ENCODE measurements at regions of chr3 and their contacts with region 1.

Region 1: GRCh38 chr3:49939858-49940666 is at the start of gene RBM6:
- DNase-seq: peak; percentile 99
- H3K4me3 ChIP-seq: peak within 1 kb of the TSS; percentile 85
- H3K27ac ChIP-seq: peak within 1 kb of the TSS; percentile 81
- H3K4me1 ChIP-seq: peaks cover 35% of the 10 kb centered on the region
- CTCF ChIP-seq: no peak
- total RNA-seq, gene RBM6: 83.7 and 134 TPM in 2 replicates

Region 2: DNA sequence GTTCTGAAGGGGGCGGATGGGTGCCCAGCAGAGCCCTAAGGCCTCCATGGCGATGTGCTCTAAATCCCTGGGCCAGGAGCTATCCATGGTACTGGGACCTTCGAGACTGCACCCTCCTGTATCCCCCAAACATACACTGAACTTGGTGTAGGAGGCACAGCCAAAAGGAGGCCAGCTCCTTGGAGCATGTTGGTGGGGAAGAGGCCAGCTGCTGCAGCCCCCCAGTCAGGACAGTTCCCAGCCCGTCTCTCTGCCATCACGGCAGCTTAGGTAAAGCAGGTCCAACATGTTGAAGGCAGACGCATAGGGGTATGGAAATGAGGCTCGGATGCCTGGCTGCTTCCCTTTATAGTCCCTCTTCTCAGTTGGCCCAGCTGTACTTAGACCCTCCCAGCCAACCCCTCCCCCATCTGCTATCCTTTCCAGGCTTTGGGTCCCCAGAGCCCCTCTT is 72.2 kb before region 1 on chr3:
- CTCF ChIA-PET with region 1: no interaction called
- POLR2A ChIA-PET with region 1: no interaction called
- intact Hi-C with region 1: no loop called
- DNase-seq: peak; percentile 30
- H3K4me3 ChIP-seq: no peak overlapping the region
- H3K27ac ChIP-seq: no peak overlapping the region
- H3K4me1 ChIP-seq: peaks cover 17% of the 10 kb centered on the region
- CTCF ChIP-seq: no peak

Region 3: GRCh38 chr3:49929331-49930240 is 10.5 kb before region 1 on chr3 and contains the start of gene MON1A:
- CTCF ChIA-PET with region 1: interaction called, 6 read pairs
- POLR2A ChIA-PET with region 1: interaction called, 32 read pairs
- intact Hi-C with region 1: no loop called
- DNase-seq: peak; percentile 87
- H3K4me3 ChIP-seq: peak within 1 kb of the TSS; percentile 76
- H3K27ac ChIP-seq: peak within 1 kb of the TSS; percentile 51
- H3K4me1 ChIP-seq: peaks cover 32% of the 10 kb centered on the region
- CTCF ChIP-seq: peak; percentile 50
- total RNA-seq, gene MON1A: 6.7 and 7.3 TPM in 2 replicates

Region 4: GRCh38 chr3:50088725-50089608 is 148.9 kb after region 1 on chr3 and contains the start of gene RBM5:
- CTCF ChIA-PET with region 1: no interaction called
- POLR2A ChIA-PET with region 1: no interaction called
- intact Hi-C with region 1: loop called (anchors 5 kb)
- DNase-seq: peak; percentile 92
- H3K4me3 ChIP-seq: peak within 1 kb of the TSS; percentile 96
- H3K27ac ChIP-seq: peak within 1 kb of the TSS; percentile 66
- H3K4me1 ChIP-seq: peaks cover 18% of the 10 kb centered on the region
- CTCF ChIP-seq: no peak
- total RNA-seq, gene RBM5: 139 and 192 TPM in 2 replicates

Measured in OCI-LY7 (cell line).